ENCODE measurements at regions of chr12 and their contacts with region 1.

Region 1: GRCh38 chr12:124399622-124400021 is 104.7 kb downstream of the RFLNA start:
- DNase-seq: peak; percentile 68
- ATAC-seq: peak; percentile 53
- H3K4me3 Mint-ChIP-seq: no peak overlapping the region
- H3K27ac Mint-ChIP-seq: no peak overlapping the region
- H3K4me1 Mint-ChIP-seq: peaks cover 21% of the 10 kb centered on the region
- H3K27me3 Mint-ChIP-seq: no peaks in the 10 kb centered on the region
- CTCF ChIP-seq: peak; percentile 36

Region 2: DNA sequence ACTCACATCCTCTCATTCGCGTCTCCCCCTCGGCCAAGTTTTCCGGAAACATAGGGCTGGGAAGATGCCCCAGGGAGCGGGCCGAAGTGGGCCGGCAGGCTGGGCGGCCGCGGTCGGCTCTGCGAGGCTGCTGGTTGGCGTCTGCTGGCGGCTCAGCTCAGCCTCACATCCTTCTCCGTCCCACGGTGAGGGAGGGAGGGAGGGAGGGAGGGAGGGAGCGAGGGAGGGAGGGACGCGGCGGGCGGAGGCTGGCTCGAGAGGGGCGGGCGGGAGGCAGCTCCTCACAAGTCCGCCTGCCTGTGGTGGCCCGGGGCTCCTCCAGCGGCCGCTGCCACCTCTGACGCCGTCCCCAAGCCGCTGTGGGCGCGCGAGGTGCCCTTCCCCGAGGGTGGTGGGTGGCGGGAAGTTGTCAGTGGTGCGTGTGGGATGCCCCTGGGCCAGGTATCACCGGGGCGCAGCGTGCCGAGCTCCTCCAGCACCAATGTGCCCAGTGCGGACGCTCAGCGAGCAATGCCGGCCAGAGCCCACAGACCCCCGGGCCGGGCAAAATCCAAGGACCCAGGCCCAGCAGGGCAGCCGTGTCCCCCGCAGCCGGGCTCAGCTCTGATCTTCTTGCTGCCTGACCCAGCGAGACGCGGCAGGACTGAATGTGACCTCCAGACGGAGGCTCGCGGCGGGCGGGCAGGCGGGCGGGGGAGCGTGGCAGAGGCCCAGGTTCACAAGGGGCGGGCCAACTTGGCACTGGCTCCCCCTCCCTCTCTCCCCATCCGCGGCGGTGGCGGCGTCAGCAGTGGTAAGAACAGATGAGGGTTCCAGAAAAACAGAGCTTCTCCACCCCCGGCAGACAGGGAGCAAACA is 10.7 kb before region 1 on chr12:
- CTCF ChIA-PET with region 1: interaction called, 54 read pairs
- POLR2A ChIA-PET with region 1: no interaction called
- DNase-seq: peak; percentile 60
- ATAC-seq: peak; percentile 25
- H3K4me3 Mint-ChIP-seq: peak overlapping the region; percentile 55
- H3K27ac Mint-ChIP-seq: no peak overlapping the region
- H3K4me1 Mint-ChIP-seq: peaks cover 16% of the 10 kb centered on the region
- H3K27me3 Mint-ChIP-seq: no peaks in the 10 kb centered on the region
- CTCF ChIP-seq: no peak

Region 3: GRCh38 chr12:124411281-124411878 is 11.8 kb after region 1 on chr12:
- CTCF ChIA-PET with region 1: interaction called, 15 read pairs
- POLR2A ChIA-PET with region 1: no interaction called
- DNase-seq: no peak
- ATAC-seq: peak; percentile 14; the same call in 1 of the 2 replicates
- H3K4me3 Mint-ChIP-seq: no peak overlapping the region
- H3K27ac Mint-ChIP-seq: peak overlapping the region; percentile 83
- H3K4me1 Mint-ChIP-seq: peaks cover 30% of the 10 kb centered on the region
- H3K27me3 Mint-ChIP-seq: no peaks in the 10 kb centered on the region; the same call in 1 of the 2 replicates
- CTCF ChIP-seq: no peak

Measured in WTC11 (cell line).